ENCODE measurements at regions of chr19 and their contacts with region 1.

Region 1: GRCh38 chr19:16143399-16144245 is at the start of gene HSH2D:
- DNase-seq: peak; percentile 91
- H3K4me3 Mint-ChIP-seq: peak within 1 kb of the TSS; percentile 99
- H3K27ac Mint-ChIP-seq: peak within 1 kb of the TSS; percentile 100
- H3K4me1 Mint-ChIP-seq: peaks cover 74% of the 10 kb centered on the region
- H3K27me3 Mint-ChIP-seq: no peaks in the 10 kb centered on the region
- total RNA-seq, gene HSH2D: 101 to 110 TPM

Region 2: DNA sequence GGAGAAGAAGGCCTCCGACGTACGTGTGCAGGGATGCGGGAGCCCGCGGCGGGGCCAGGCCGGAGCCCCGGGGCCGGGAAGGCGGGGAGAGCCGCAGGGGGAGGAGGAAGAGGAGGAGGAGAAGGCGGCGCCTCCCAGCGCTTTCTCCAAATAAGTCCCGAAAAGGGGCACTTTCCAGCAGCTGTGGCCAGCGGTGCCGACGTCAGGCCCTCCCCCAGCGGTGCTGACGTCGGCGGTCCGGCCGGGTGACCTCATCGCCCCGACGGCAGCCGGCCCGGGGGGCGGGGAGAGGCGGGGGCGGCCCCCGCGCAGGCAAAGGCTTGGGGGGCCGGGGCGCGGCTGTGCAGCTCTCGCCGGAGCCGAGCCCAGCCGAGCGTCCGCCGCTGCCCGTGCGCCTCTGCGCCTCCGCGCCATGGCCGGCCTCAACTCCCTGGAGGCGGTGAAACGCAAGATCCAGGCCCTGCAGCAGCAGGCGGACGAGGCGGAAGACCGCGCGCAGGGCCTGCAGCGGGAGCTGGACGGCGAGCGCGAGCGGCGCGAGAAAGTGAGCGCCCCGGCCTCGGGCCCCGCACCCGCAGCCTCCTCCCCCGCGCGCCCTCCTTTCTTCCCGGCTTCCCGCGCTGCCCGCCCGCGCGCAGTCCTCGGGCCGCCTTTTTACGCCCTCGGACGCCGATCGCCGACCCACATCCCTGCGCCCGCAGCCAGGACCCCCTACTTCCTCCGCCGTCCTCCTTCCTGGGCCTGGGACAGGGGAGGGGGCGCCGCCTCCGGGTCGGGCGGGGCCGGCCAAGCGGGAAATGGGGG is 67.3 kb before region 1 on chr19 and contains the start of gene TPM4:
- CTCF ChIA-PET with region 1: interaction called, 5 read pairs
- POLR2A ChIA-PET with region 1: interaction called, 38 read pairs
- DNase-seq: peak; percentile 94
- H3K4me3 Mint-ChIP-seq: peak within 1 kb of the TSS; percentile 82
- H3K27ac Mint-ChIP-seq: peak within 1 kb of the TSS; percentile 98
- H3K4me1 Mint-ChIP-seq: peaks cover 65% of the 10 kb centered on the region
- H3K27me3 Mint-ChIP-seq: no peaks in the 10 kb centered on the region
- total RNA-seq, gene TPM4: 592 to 611 TPM

Region 3: GRCh38 chr19:16095071-16095571 is 48.5 kb before region 1 on chr19:
- CTCF ChIA-PET with region 1: no interaction called
- POLR2A ChIA-PET with region 1: interaction called, 11 read pairs
- DNase-seq: no peak
- H3K4me3 Mint-ChIP-seq: no peak overlapping the region
- H3K27ac Mint-ChIP-seq: peak overlapping the region; percentile 65
- H3K4me1 Mint-ChIP-seq: peaks cover 41% of the 10 kb centered on the region
- H3K27me3 Mint-ChIP-seq: no peaks in the 10 kb centered on the region

Region 4: GRCh38 chr19:16118489-16119033 is 25.1 kb before region 1 on chr19:
- CTCF ChIA-PET with region 1: interaction called, 9 read pairs
- POLR2A ChIA-PET with region 1: interaction called, 32 read pairs
- DNase-seq: peak; percentile 57
- H3K4me3 Mint-ChIP-seq: peak overlapping the region; percentile 75
- H3K27ac Mint-ChIP-seq: peak overlapping the region; percentile 99
- H3K4me1 Mint-ChIP-seq: peaks cover 77% of the 10 kb centered on the region
- H3K27me3 Mint-ChIP-seq: no peaks in the 10 kb centered on the region

Region 5: GRCh38 chr19:16160943-16161560 is 17.4 kb after region 1 on chr19:
- CTCF ChIA-PET with region 1: interaction called, 3 read pairs
- POLR2A ChIA-PET with region 1: interaction called, 39 read pairs
- DNase-seq: peak; percentile 33
- H3K4me3 Mint-ChIP-seq: no peak overlapping the region
- H3K27ac Mint-ChIP-seq: peak overlapping the region; percentile 71
- H3K4me1 Mint-ChIP-seq: peaks cover 21% of the 10 kb centered on the region
- H3K27me3 Mint-ChIP-seq: no peaks in the 10 kb centered on the region

Region 6: GRCh38 chr19:16185123-16185767 is 41.6 kb after region 1 on chr19 and contains the start of gene FAM32A:
- CTCF ChIA-PET with region 1: interaction called, 16 read pairs
- POLR2A ChIA-PET with region 1: interaction called, 13 read pairs
- DNase-seq: peak; percentile 100
- H3K4me3 Mint-ChIP-seq: peak within 1 kb of the TSS; percentile 97
- H3K27ac Mint-ChIP-seq: peak within 1 kb of the TSS; percentile 89
- H3K4me1 Mint-ChIP-seq: peaks cover 37% of the 10 kb centered on the region
- H3K27me3 Mint-ChIP-seq: peaks cover 2% of the 10 kb centered on the region
- total RNA-seq, gene FAM32A: 66.0 to 70.8 TPM

Region 7: DNA sequence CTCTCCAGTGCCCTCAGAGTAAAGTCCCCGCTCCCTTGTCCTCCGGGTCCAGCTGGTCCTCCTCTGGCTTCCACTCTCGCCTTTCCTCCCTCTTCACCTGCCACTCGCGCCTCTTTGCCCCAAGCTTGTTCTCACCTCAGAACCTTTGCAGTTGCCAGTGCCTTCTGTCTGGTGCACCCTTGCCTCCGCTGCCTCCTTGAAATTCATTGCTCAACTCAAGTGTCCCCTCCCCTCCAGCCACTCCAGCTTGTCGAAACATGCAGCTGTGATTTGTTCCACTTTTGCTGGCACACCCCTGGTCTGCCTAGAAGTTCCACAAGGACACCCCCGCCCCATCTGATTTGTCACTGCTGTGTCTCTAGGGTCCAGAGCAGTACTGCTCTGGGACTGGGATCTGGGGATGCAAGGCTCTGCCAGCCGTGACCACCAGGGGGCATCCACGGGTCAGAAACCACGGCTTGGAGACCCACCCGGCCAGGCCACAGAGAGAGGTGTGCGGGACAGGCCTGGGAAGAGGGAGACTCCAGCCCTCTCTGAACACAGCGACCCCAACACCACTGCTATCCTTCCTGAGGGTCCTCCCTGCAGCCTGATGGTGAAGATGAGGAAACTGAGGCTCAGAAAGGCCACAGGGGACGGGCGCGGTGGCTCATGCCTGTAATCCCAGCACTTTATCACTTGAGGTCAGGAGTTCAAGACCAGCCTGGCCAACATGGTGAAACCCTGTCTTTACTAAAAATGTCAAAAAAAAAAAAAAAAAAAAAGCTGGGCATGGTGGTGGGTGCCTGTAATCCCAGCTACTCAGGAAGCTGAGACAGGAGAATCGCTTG is 103.9 kb after region 1 on chr19:
- CTCF ChIA-PET with region 1: no interaction called
- POLR2A ChIA-PET with region 1: no interaction called
- DNase-seq: peak; percentile 87
- H3K4me3 Mint-ChIP-seq: no peak overlapping the region
- H3K27ac Mint-ChIP-seq: peak overlapping the region; percentile 55
- H3K4me1 Mint-ChIP-seq: peaks cover 28% of the 10 kb centered on the region
- H3K27me3 Mint-ChIP-seq: peaks cover 19% of the 10 kb centered on the region

Measured in activated CD4-positive, alpha-beta memory T cell treated with anti-CD3 and anti-CD28 coated beads, Interleukin-2, amount 10 ng/mL, durations not matched to agents 7 days and 5 days (primary cell).